ENCODE measurements at regions of chr2 and their contacts with region 1.

Region 1: GRCh38 chr2:230326453-230327417 is at the start of gene SP140L:
- DNase-seq: peak; percentile 65 to 89 (median 76)
- ATAC-seq: peak; percentile 99 to 100
- H3K4me3 Mint-ChIP-seq: peak within 1 kb of the TSS; percentile 86 to 99 (median 96)
- H3K27ac Mint-ChIP-seq: peak within 1 kb of the TSS; percentile 95 to 100 (median 99)
- H3K4me1 Mint-ChIP-seq: peaks cover 46 to 88% (median 83%) of the 10 kb centered on the region in 4 donors
- H3K27me3 Mint-ChIP-seq: no peaks in the 10 kb centered on the region
- polyA plus RNA-seq, gene SP140L: 25.3 to 43.1 (median 28.9) TPM

Region 2: DNA sequence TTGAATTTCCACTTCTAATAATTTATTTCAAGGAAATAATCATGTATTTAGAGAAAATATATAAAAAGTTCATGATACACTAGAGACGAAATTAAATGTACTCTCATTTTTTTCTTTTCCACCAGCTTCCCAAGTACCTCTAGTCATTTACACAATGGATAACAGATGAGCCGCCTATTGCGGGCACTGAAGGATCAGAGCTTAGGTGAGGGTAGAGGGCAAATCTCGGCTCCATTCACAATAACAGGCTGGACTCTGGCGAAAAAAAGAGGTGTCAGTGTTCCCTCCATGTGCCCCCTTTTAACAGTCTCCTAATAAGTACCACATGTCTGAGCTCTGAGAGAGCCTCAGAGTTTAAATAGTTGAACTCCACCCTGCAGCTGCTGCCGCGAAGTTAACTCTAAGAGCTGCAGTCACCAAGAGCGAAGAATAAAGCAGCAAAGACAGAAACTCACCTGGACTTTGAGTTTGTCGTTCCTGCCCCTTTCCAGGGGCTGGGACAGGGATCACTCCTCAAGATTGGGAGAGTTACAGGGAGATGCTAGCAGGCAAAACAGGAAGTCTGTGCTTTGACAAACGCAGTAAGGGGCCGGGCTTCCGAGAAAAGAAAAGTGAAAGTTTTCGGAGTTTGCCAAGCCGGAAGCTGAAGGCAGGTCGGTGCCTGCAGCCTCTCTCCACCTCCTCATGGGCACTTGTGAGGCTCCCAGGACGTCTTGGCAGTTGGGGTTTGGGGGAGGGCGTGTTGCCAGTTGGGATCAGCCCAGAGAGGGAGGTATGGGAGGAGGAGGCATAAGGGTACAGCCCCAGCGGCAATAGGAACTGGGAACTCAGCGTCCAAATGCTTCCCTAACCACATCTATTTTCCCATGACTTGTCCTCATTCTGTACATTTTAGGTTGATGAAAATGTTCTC is 107.1 kb before region 1 on chr2 and contains the start of gene SP110:
- POLR2A ChIA-PET with region 1: interaction called, 36 read pairs
- DNase-seq: peak; percentile 49 to 87 (median 75)
- ATAC-seq: peak; percentile 94 to 95
- H3K4me3 Mint-ChIP-seq: peak within 1 kb of the TSS; percentile 97 to 100 (median 98)
- H3K27ac Mint-ChIP-seq: peak within 1 kb of the TSS; percentile 97 to 100 (median 99)
- H3K4me1 Mint-ChIP-seq: peaks cover 36 to 83% (median 59%) of the 10 kb centered on the region in 4 donors
- H3K27me3 Mint-ChIP-seq: no peaks in the 10 kb centered on the region
- polyA plus RNA-seq, gene SP110: 82.8 to 115 (median 112) TPM